Left ventricle myocardium inferior (tissue), 1 donor: ENCODE measurements at regions of chr12 and their contacts with region 1.

Region 1: DNA sequence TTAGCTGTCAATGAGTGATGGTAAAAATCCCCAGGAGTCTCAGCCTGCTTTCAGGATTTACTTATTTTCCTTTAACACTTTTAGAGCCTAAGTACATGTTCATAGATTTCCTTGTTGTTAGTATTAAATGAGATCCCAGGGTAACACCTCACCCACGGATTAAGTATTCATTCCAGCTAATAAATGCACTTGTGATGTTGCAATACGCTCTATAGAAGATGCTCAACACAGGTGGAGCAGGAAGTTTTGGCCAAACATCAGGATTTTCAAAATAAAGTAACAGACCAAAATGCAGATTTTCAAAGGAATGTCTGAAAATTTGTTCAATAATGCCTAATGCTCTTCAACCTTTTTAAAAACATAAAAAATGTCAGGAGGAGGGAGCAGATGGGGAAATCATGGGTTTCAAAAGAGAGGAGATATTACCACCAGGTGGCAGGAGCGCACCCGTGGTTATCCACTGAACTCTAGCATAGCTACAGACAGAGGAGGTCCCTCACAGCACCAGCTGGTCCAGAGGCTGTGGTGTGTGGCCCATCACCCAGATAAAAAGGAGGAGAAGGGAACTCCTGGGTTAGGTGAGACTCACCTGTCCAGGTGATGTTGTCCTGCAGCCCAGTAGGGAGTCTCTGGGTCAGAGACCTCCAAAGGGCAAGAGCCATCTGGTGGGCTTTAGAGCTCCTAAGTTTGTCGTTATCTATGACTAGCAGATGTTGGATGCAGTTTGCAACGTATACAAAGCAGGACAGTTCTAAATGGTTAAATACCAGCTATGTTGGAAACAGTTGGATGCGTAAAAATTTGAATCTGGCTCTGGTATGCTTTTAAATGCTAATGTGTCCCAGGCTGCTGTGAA is 1158.4 kb upstream of the TMEM132C start:
- DNase-seq: peak; percentile 36
- H3K4me3 ChIP-seq: no peak overlapping the region
- H3K27ac ChIP-seq: no peak overlapping the region
- H3K4me1 ChIP-seq: no peaks in the 10 kb centered on the region
- H3K27me3 ChIP-seq: peaks cover 33% of the 10 kb centered on the region
- CTCF ChIP-seq: peak; percentile 81

Region 2: GRCh38 chr12:127293507-127294310 is 185.1 kb after region 1 on chr12:
- intact Hi-C with region 1: loop called (anchors 5 kb)
- DNase-seq: peak; percentile 30
- H3K4me3 ChIP-seq: no peak overlapping the region
- H3K27ac ChIP-seq: no peak overlapping the region
- H3K4me1 ChIP-seq: no peaks in the 10 kb centered on the region
- H3K27me3 ChIP-seq: peaks cover 56% of the 10 kb centered on the region
- CTCF ChIP-seq: peak; percentile 76

Region 3: DNA sequence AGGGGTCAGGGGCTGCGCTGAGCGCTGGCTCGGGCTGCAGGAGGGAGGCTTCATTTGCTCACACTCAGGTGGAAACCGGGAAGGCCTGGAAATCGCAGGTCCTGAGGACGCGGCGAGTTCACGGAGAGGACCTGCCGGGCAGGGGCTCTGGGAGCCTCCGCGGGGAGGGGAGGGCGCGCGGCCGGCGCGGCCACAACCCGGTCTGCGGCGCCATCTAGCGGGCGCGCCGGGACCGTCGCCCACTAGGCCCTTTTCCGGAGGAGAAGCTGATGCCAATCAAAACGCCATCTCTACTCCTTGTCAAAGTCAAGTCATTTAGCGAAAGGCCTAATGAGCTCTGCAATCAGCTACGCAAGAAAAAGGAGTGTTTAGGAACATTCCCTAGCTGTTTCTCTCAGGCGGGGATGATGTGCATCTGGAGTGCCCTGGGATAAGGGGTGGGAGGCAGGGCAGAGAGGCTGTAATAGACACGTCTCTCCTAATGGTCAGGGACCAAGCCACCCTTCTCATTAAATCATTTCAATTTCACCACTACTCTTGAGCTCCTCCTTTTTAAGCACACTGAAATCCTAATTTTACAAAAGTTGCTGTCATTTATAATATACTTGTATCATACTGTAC is 272.6 kb after region 1 on chr12:
- intact Hi-C with region 1: loop called (anchors 10 kb)
- DNase-seq: peak; percentile 16
- H3K4me3 ChIP-seq: peak overlapping the region; percentile 46
- H3K27ac ChIP-seq: no peak overlapping the region
- H3K4me1 ChIP-seq: peaks cover 6% of the 10 kb centered on the region
- H3K27me3 ChIP-seq: peaks cover 62% of the 10 kb centered on the region
- CTCF ChIP-seq: peak; percentile 88

Region 4: DNA sequence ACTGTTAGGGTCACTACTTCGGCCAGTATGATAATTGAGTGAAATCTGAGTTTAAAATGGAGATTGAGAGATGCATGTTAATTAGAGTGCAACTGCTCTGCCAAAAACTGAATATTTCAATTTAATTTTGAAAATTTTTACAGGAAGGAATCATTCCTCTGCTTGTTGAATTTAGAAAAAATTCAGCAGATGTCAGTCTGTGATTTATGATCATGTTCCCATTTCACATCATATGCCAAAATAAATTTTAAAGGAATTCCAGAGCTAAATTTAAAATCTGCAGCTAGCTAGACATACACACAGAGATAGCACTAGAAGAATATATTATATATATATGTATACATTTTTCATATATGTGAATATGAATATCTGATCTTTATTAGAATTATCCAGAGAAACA is 360.7 kb after region 1 on chr12:
- intact Hi-C with region 1: no loop called
- DNase-seq: no peak
- H3K4me3 ChIP-seq: no peak overlapping the region
- H3K27ac ChIP-seq: no peak overlapping the region
- H3K4me1 ChIP-seq: no peaks in the 10 kb centered on the region
- H3K27me3 ChIP-seq: peaks cover 5% of the 10 kb centered on the region
- CTCF ChIP-seq: no peak